A673 (cell line): ENCODE measurements at regions of chr4 and their contacts with region 1.

Region 1: GRCh38 chr4:19684084-19684483 is 567.6 kb upstream of the SLIT2 start:
- DNase-seq: no peak
- H3K4me3 ChIP-seq: no peak overlapping the region
- H3K27ac ChIP-seq: no peak overlapping the region
- H3K4me1 ChIP-seq: no peaks in the 10 kb centered on the region
- H3K27me3 ChIP-seq: no peaks in the 10 kb centered on the region
- CTCF ChIP-seq: no peak

Region 2: GRCh38 chr4:19177616-19178015 is 506.5 kb before region 1 on chr4:
- CTCF ChIA-PET with region 1: no interaction called
- POLR2A ChIA-PET with region 1: no interaction called
- intact Hi-C with region 1: loop called (anchors 5 kb)
- DNase-seq: no peak
- H3K4me3 ChIP-seq: no peak overlapping the region
- H3K27ac ChIP-seq: no peak overlapping the region
- H3K4me1 ChIP-seq: no peaks in the 10 kb centered on the region
- H3K27me3 ChIP-seq: no peaks in the 10 kb centered on the region
- CTCF ChIP-seq: no peak